Activated CD4-positive, alpha-beta T cell treated with anti-CD3 and anti-CD28 coated beads, Interleukin-2, amount 10 ng/mL, durations not matched to agents 24 days and 14 days (primary cell): ENCODE measurements at regions of chr3 and their contacts with region 1.

Region 1: GRCh38 chr3:13189639-13190377 is 116.6 kb upstream of the IQSEC1 start:
- DNase-seq: peak; percentile 61
- H3K4me3 Mint-ChIP-seq: peak overlapping the region; percentile 35
- H3K27ac Mint-ChIP-seq: peak overlapping the region; percentile 68
- H3K4me1 Mint-ChIP-seq: peaks cover 15% of the 10 kb centered on the region
- H3K27me3 Mint-ChIP-seq: peaks cover 5% of the 10 kb centered on the region

Region 2: DNA sequence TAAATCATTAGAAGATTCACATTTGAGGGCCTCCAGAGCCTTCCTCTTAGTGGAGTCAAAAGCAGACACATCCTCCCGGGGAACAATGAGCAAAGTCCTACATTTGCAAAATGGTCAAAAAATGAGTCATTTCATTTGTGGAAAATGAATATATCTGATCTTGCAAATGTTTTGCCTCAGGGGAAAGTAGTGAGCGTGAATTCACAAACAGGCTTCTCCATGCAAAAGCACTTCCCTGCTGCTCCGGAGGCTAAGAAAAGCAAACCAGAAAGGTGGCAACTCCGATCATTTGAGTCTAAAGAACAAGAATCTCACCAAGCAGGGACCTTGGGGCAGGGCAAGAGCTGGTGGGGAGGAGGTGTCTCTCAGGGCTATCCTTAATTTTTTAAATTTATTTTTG is 29.9 kb before region 1 on chr3:
- intact Hi-C with region 1: loop called (anchors 1 kb)
- DNase-seq: no peak
- H3K4me3 Mint-ChIP-seq: no peak overlapping the region
- H3K27ac Mint-ChIP-seq: no peak overlapping the region
- H3K4me1 Mint-ChIP-seq: no peaks in the 10 kb centered on the region
- H3K27me3 Mint-ChIP-seq: peaks cover 6% of the 10 kb centered on the region

Region 3: DNA sequence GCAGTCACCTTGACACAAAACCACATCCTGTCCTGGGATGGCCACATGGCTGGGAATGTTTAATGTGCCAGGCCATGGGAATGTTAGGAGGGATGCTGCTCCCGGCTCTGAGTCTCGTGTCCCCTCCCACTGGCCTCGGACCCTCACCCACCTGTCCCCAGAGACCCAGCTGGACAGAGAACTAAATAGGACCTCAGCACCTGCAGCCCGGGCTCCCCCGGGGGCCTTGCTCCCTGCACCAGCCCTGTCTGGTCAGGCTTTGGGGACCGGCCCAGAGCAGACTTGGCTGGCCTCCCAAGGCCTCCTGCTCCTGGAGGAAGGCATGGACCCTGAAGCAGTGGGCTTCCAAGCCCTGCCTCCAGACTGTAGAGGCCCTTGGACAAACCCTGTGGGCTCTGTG is 16.6 kb before region 1 on chr3:
- intact Hi-C with region 1: no loop called
- DNase-seq: no peak
- H3K4me3 Mint-ChIP-seq: no peak overlapping the region
- H3K27ac Mint-ChIP-seq: no peak overlapping the region
- H3K4me1 Mint-ChIP-seq: no peaks in the 10 kb centered on the region
- H3K27me3 Mint-ChIP-seq: peaks cover 2% of the 10 kb centered on the region